GM13976 (cell line): ENCODE measurements at regions of chr11 and their contacts with region 1.

Region 1: DNA sequence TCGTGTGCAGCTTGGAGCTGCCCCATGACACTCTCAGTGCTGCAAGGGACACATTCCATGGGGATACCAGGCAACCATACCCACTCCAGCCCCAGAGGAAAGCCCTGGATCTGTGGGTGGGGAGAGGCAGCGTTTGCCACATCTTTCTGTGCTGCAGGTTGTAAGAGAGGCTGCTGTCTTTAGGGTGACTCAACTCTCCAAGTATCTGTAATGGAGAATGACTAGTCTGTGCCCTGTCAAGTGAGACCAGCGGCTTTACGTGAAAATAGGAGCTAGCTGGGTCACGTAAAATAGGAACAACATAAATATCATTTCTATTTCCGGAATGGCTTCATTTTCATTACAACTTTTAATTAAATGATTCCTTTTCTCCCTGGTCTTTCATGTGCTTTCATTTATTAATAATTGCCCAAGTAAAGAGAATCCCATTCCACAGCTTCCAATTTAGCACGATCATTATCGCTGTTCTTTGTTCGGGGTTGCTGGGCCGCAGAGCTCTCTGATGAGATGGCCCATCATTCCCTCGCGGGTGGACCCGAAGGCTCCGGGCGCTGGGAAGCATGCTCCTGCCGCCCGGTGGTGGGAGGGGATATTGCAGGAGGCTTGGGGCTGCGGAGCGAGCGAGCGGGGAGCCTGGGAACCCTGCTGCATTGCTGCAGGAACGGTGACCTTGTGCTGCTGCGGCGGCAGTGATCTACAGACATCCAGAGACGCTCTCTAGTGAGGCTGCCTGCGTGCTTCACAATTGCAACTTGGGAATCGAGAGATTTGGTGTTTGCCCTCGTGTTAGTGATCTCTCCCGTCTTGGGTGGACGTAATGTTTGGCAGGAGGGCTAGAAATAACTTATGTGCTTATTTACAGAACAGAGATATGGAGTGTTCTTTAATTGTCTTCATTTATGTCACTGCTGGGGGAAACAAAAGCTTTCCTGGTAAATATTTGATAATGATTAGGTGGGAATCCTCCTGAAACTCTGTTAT is 10.6 kb downstream of the SLC6A5 start:
- DNase-seq: peak; percentile 83
- CTCF ChIP-seq: peak; percentile 96

Region 2: DNA sequence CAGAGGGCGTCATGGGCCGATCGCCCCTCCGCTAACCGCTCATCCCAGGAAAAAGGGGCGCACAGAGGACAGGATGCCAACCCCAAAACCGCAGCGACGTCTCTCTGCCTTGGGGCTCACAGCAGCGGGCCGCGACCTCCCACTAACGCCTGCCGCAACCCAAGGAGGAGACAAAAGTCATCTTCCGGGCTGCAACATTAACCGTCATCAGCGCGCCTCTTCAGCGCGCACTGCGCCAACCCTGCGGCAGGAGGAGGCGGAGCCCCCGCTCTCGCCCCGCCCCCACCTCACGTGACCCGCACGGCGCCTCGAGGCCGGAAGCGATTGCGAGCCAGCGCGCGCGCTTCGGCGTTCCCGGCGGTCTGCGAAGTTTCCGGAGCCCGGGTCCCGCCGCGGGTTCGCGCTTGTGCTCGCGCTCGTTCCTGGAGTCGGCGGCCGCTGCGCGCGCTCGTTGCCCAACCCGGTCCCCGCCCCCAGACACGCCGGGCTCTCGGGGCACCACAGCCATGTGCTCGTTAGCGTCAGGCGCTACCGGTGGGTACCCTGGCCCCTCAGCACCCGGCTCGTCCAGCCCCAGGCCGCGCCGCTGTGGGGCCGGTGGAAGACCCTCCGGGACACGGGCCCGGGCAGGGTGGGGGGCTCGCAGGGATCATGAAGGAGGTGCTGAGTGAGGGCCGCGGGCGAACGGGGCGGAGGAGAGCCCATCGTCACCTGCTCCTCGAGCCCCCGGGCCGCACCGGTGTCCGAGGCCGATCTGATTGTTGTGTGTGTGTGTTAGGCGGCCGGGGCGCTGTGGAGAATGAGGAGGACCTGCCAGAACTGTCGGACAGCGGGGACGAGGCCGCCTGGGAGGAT is 222.5 kb before region 1 on chr11 and contains the start of gene PRMT3:
- in situ Hi-C with region 1: loop called (anchors 10 kb)
- DNase-seq: peak; percentile 97
- CTCF ChIP-seq: no peak